ENCODE measurements at regions of chr2 and their contacts with region 1.

Region 1: DNA sequence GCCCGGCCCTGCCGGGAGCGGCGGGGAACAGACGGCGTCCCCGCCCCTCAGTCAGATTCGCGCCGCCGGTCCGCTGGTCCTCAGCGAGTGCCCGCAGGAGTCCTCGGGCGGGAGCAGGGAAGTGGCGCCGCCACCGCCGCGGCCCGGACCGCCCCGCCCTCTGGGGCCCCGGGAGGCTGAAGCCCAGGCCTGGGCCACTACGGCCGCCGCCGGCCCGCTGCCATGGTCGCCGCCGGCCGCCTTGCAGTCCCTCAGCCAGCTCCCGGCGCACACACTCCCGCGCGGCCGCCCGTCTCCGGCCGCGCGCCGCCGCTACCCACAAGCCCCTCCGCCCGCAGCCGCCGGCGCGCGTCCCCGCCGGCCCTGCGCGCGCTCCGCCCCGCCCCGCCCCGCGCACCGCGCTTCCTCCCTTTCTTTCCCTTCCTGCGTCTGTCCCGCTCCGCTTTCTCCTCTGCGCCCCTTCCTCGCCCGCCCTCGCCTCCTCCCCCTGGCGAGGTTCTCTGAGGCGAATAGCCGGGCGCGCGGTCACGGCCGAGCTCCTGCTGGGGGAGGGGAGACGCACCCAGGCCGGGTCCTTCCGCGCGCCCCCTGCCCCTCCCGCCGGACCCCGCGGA is at the start of gene ROCK2:
- DNase-seq: peak; percentile 90 to 93 (median 91)
- ATAC-seq: peak; percentile 84 to 92 (median 86)
- H3K4me3 ChIP-seq: peak within 1 kb of the TSS; percentile 69 to 100 (median 94)
- H3K27ac ChIP-seq: peak within 1 kb of the TSS; percentile 94 to 100 (median 99)
- H3K4me1 ChIP-seq: peaks cover 7 to 53% (median 36%) of the 10 kb centered on the region in 12 donors
- H3K27me3 ChIP-seq: no peaks in the 10 kb centered on the region
- CTCF ChIP-seq: no peak
- POLR2A ChIP-seq: peak in 1 of 2 donors; percentile 13
- total RNA-seq, gene ROCK2: 25.3 to 44.3 (median 39.0) TPM

Region 2: DNA sequence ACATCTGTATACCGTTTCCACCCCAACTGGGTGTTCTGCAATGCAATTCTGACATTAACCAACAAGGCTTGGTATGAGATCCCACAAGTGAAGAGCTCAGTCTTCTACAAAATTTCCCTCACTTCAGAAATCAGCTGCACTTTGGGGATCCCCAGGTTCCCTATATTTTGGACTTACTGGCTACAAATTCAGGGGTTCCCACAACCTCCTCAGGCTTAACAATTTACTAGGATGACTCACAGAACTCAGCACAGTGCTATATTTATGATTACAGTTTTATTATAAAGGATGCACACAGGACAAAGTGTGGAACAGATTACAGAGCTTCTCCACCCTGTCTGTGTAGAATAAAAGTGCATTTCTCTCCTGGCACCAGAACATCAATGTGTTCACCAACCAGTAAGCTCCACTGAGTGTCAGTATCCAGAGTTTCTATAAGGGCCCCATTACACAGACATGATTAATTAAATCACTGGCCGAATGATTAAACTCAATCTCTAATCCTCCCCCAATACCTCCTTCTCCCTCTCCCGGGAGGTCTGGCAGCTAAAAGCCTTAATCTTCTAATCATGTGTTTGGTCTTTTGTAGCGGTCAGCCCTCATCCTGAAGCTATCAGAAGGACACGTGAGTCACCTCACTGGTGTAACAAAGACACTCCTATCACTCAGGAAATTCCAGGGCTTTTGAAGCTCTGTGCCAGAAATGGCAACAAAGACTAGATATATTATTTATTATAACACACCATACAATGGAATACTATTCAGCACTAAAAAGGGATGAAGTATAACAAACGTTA is 104.6 kb before region 1 on chr2:
- intact Hi-C with region 1: loop called in 8 of 10 experiments (anchors 2 to 10 kb)
- DNase-seq: no peak
- ATAC-seq: peak in 3 of 4 donors; percentile 49 to 79 (median 64)
- H3K4me3 ChIP-seq: no peak overlapping the region
- H3K27ac ChIP-seq: peak overlapping the region in 2 of 12 donors; percentile 5 to 28
- H3K4me1 ChIP-seq: peaks cover 0 to 16% (median 9%) of the 10 kb centered on the region in 12 donors
- H3K27me3 ChIP-seq: no peaks in the 10 kb centered on the region
- CTCF ChIP-seq: no peak
- POLR2A ChIP-seq: no peak

Region 3: DNA sequence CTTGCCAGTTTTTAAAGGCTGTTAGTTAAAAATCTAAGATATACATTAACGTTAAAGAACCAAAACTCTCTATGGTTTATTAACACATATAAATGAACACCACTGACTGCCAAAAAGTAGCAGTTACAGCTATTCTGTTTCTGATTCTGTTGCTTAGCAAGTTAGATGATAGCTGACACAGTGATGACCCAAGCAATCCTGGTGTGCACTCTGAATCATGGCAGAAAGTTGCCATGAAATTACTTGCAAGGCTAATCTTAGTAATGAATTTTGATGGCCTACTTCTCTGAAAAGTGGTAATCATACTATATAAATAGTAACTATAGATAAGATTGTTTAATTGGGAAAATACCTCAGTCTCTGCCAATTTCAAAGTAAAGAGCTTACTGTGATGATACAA is 57.7 kb before region 1 on chr2:
- intact Hi-C with region 1: loop called in 5 of 10 experiments (anchors 5 to 10 kb)
- DNase-seq: peak in 1 of 5 donors; percentile 27
- ATAC-seq: peak; percentile 82 to 89 (median 88)
- H3K4me3 ChIP-seq: no peak overlapping the region
- H3K27ac ChIP-seq: peak overlapping the region in 11 of 12 donors; percentile 7 to 63 (median 24)
- H3K4me1 ChIP-seq: peaks cover 0 to 50% (median 27%) of the 10 kb centered on the region in 12 donors
- H3K27me3 ChIP-seq: no peaks in the 10 kb centered on the region
- CTCF ChIP-seq: no peak
- POLR2A ChIP-seq: no peak

Region 4: DNA sequence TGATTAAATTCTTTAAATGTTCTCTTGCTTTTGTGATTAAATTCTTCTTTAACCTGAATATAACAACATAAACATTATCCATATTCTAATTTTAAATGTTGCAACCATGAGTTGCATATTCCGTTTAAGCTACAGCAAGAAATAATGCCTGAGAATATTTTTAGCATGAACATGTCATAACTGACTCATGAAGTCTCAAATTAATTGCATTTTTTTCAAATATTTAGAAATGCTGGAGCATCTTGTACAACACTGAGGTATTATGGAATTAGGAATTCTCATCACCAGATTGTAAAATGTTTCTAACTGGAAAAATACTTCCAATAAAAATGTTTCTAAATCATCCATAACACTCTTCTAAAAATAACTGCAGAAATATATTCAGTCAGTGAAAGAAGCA is 14.7 kb before region 1 on chr2:
- intact Hi-C with region 1: no loop called
- DNase-seq: no peak
- ATAC-seq: no peak
- H3K4me3 ChIP-seq: peak overlapping the region in 2 of 12 donors; percentile 23 to 25
- H3K27ac ChIP-seq: peak overlapping the region in 4 of 12 donors; percentile 0 to 51 (median 18)
- H3K4me1 ChIP-seq: peaks cover 0 to 49% (median 32%) of the 10 kb centered on the region in 12 donors
- H3K27me3 ChIP-seq: no peaks in the 10 kb centered on the region
- CTCF ChIP-seq: no peak
- POLR2A ChIP-seq: no peak

Region 5: DNA sequence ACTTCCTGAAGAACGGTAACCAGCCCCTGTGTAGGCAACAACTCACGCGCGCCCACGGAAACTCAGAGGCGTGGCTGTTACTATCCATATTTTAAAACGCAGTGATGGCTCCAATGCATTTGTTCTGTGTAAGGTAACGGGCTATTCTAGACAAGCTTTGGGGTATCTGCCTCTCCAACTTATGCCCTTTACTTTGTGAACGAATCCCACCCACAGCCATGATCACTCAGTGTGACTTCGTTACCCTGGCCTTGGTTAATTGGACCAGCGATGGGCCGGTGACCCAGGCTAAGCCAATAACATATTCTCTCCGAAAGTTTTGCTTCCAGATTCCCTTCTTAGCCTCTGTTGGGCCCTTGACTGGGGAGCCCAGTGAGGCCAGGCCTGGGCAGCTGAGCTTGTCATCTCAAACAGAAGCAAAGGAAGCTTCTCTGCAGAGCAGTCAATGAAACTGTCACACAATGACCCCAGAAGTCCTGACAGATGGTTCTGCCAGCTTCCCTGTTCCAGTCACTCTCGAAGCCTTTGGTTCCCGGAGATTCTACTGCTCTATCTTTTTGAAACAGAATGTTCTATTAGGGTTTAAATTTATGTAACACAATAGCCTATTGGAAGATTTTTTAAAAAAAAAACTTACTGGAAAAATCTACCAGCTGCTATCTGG is 30.7 kb after region 1 on chr2:
- intact Hi-C with region 1: loop called in 1 of 10 experiments (anchors 2 kb)
- DNase-seq: no peak
- ATAC-seq: peak in 1 of 4 donors; percentile 20
- H3K4me3 ChIP-seq: peak overlapping the region in 1 of 12 donors; percentile 11
- H3K27ac ChIP-seq: peak overlapping the region; percentile 40 to 93 (median 76)
- H3K4me1 ChIP-seq: peaks cover 4 to 35% (median 16%) of the 10 kb centered on the region in 12 donors
- H3K27me3 ChIP-seq: no peaks in the 10 kb centered on the region
- CTCF ChIP-seq: no peak
- POLR2A ChIP-seq: no peak

Region 6: DNA sequence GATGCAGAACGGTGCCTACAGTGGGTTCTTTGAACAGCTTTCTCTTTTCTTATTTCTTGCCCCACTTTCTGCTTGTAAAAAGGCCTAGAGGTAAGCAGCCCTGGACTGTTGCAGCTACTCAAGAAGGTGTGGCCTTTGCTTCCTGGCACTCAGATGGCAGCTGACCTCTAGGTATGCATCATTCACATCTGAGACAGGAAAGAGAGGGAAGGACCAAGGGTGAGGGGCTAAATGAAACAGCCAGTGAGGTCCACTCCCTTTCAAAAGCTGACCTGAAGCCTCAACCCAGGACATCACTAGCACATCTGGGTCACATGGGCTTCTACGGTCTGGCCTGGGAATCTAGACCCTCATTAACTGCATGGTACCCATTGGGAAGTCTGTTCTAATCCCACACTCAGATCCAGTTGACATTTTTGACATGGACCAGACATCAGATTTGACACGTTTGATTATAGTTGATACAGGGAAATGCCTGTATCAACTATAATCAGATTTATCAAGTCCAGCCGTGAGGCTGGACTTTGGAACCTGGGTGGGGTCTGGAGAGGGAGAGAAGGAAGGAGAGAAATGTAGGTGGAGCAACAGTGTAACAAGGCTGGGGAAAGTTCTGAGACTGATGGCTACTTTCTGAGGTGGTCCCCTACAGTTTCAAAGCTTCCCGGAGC is 61.3 kb after region 1 on chr2:
- intact Hi-C with region 1: loop called in 7 of 10 experiments (anchors 2 to 5 kb)
- DNase-seq: no peak
- ATAC-seq: no peak
- H3K4me3 ChIP-seq: no peak overlapping the region
- H3K27ac ChIP-seq: peak overlapping the region in 11 of 12 donors; percentile 55 to 92 (median 79)
- H3K4me1 ChIP-seq: peaks cover 0 to 44% (median 22%) of the 10 kb centered on the region in 12 donors
- H3K27me3 ChIP-seq: no peaks in the 10 kb centered on the region
- CTCF ChIP-seq: no peak
- POLR2A ChIP-seq: no peak

Region 7: GRCh38 chr2:11498543-11499080 is 154.2 kb after region 1 on chr2:
- intact Hi-C with region 1: no loop called
- DNase-seq: peak; percentile 89 to 95 (median 90)
- ATAC-seq: peak; percentile 95 to 97 (median 96)
- H3K4me3 ChIP-seq: no peak overlapping the region
- H3K27ac ChIP-seq: peak overlapping the region in 11 of 12 donors; percentile 19 to 91 (median 82)
- H3K4me1 ChIP-seq: peaks cover 0 to 28% (median 16%) of the 10 kb centered on the region in 12 donors
- H3K27me3 ChIP-seq: peaks cover 0 to 4% (median 0%) of the 10 kb centered on the region in 9 donors
- CTCF ChIP-seq: peak in 1 of 12 donors; percentile 8
- POLR2A ChIP-seq: peak in 1 of 2 donors; percentile 26